ENCODE measurements at regions of chr17 and their contacts with region 1.

Region 1: DNA sequence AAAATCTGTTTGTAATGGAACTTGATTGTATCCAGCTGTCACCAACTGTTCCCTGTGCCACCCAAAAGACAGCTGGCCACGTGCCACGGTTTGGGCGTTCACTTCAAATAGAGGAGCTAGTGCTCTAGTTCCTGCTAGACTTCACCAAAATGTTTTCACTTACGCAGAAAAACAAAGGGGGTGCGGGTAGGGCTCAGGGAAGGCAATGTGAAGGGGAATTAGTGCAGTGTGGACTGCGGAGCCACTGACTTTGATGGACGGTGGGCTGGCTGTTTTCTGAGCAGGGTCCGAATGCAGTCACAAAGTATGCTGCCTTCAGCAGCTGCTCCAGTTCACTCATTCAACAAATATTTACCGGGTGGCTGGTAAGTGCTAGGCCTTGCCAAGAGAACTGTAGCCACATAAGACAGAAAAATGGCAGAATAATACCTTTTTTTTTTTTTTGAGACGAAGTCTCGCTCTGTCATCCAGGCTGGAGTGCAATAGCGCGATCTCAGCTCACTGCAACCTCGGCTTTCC is 7.6 kb upstream of the CYTH1 start:
- DNase-seq: peak; percentile 60 to 91 (median 83)
- ATAC-seq: peak; percentile 28 to 59 (median 43)
- H3K4me3 ChIP-seq: no peak overlapping the region
- H3K27ac ChIP-seq: peak overlapping the region in 10 of 12 donors; percentile 13 to 76 (median 48)
- H3K4me1 ChIP-seq: peaks cover 0 to 43% (median 30%) of the 10 kb centered on the region in 12 donors
- H3K27me3 ChIP-seq: no peaks in the 10 kb centered on the region
- CTCF ChIP-seq: no peak
- POLR2A ChIP-seq: no peak

Region 2: GRCh38 chr17:78723001-78723796 is 66.5 kb before region 1 on chr17:
- intact Hi-C with region 1: loop called in 4 of 10 experiments (anchors 5 to 10 kb)
- DNase-seq: peak in 4 of 5 donors; percentile 57 to 71 (median 58)
- ATAC-seq: peak; percentile 73 to 86 (median 79)
- H3K4me3 ChIP-seq: peak overlapping the region in 11 of 12 donors; percentile 12 to 62 (median 43)
- H3K27ac ChIP-seq: peak overlapping the region in 11 of 12 donors; percentile 20 to 72 (median 57)
- H3K4me1 ChIP-seq: peaks cover 6 to 93% (median 47%) of the 10 kb centered on the region in 12 donors
- H3K27me3 ChIP-seq: no peaks in the 10 kb centered on the region
- CTCF ChIP-seq: no peak
- POLR2A ChIP-seq: no peak

Region 3: GRCh38 chr17:79045842-79046196 is 256.1 kb after region 1 on chr17:
- intact Hi-C with region 1: no loop called
- DNase-seq: peak; percentile 77 to 89 (median 77)
- ATAC-seq: peak; percentile 60 to 77 (median 68)
- H3K4me3 ChIP-seq: peak overlapping the region in 3 of 12 donors; percentile 11 to 39 (median 27)
- H3K27ac ChIP-seq: peak overlapping the region in 11 of 12 donors; percentile 45 to 76 (median 65)
- H3K4me1 ChIP-seq: peaks cover 6 to 47% (median 24%) of the 10 kb centered on the region in 12 donors
- H3K27me3 ChIP-seq: no peaks in the 10 kb centered on the region
- CTCF ChIP-seq: peak; percentile 92 to 98 (median 95)
- POLR2A ChIP-seq: no peak

Measured in heart left ventricle (tissue), 16 donors.